HEK293 (cell line): ENCODE measurements at regions of chr5 and their contacts with region 1.

Region 1: DNA sequence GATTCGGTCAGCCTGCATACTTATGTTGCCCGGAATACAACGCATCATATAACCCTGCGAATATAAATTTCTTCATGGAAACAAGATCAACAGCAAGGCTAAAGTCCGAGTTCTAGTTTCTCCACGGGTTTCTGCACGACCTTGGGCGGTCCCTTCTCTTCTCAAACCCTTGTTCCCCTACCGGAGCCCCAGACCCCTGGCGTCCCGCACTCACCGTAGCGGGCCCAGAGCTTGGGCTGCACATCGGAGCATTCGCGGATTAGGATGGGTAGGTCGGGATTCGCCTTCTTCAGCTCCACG is 438 bp downstream of the NDUFA2 start:
- H3K4me3 ChIP-seq: peak overlapping the region; percentile 80
- H3K27ac ChIP-seq: peak overlapping the region; percentile 60; the same call in 1 of the 2 replicates
- H3K4me1 ChIP-seq: peaks cover 2% of the 10 kb centered on the region; the same call in 1 of the 2 replicates
- CTCF ChIP-seq: no peak

Region 2: DNA sequence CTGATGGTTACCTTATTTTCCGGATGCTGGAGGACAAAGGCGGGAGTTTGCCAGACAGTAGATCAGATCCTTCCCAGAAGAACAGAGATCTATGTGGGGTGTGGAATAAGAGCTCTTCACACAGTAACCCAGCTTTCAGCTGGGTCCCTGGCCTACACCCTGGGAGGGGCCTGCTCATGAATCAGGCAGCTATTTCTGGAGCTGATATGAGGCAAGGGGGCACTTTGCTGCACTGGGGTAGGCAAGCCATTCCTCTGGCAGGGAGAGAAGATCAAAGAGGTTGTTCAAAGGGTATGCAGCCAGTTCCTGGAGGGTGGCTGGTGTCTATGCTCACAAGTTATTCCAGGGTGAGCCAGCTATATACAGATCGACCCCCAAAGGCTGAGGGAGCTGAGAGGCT is 423.4 kb before region 1 on chr5:
- CTCF ChIA-PET with region 1: no interaction called
- POLR2A ChIA-PET with region 1: no interaction called
- H3K4me3 ChIP-seq: no peak overlapping the region
- H3K27ac ChIP-seq: no peak overlapping the region
- H3K4me1 ChIP-seq: peaks cover 22% of the 10 kb centered on the region
- CTCF ChIP-seq: no peak

Region 3: GRCh38 chr5:140401362-140402257 is 245.4 kb before region 1 on chr5 and contains the start of gene ANKHD1:
- CTCF ChIA-PET with region 1: no interaction called
- POLR2A ChIA-PET with region 1: interaction called, 10 read pairs
- H3K4me3 ChIP-seq: peak within 1 kb of the TSS; percentile 98
- H3K27ac ChIP-seq: peak within 1 kb of the TSS; percentile 91
- H3K4me1 ChIP-seq: peaks cover 8% of the 10 kb centered on the region; the same call in 1 of the 2 replicates
- CTCF ChIP-seq: peak; percentile 64; the same call in 1 of the 2 replicates

Region 4: GRCh38 chr5:140557136-140557805 is 89.7 kb before region 1 on chr5 and contains the start of gene SRA1:
- CTCF ChIA-PET with region 1: no interaction called
- POLR2A ChIA-PET with region 1: interaction called, 19 read pairs
- H3K4me3 ChIP-seq: peak within 1 kb of the TSS; percentile 90
- H3K27ac ChIP-seq: peak within 1 kb of the TSS; percentile 71
- H3K4me1 ChIP-seq: 0 out of 2 replicates have a peak, but pooled peaks cover 4% of the 10 kb centered on the region
- CTCF ChIP-seq: peak; percentile 45; the same call in 1 of the 2 replicates

Region 5: DNA sequence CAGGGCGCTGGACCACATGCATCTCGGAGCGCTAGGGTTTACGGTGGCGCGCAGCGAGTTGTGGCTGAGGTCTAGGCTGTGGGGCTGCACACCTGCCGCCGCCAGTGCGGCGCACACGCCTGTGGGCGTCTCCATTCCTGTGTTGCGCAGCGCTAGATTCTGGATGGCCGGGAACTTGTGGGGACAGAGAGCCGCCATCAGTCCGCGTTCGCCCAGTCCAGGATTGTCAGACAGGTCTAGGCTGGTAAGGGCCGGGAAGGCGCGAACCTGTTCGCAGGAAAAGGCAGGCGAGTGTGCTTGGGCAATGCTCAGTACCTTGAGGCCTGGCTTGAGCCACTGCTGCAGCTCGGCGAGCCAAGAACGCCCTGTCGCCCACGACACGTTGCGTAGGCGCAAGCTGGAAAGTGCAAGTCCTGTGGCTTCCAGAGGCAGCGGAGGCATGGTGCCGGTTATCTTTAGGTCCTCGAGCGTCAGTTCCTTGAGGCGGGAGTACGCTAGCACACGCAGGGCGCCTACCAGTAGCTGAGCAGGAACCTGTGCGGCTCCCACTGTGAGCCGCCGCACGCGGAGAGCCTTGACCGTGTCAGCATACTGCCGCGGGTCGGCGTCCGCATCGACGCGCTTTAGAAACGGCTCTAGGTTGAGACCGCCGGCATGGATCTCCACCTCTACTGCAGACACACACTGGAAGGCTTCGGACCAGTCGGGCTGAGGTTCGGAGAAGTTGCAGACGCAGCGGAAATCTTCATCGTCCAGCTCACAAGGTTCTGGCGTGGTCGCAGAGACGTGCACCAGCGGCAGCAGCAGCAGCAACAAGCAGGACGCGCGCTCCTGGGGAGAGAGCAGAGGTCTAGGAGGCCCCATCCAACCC is 14.6 kb before region 1 on chr5:
- CTCF ChIA-PET with region 1: interaction called, 10 read pairs
- POLR2A ChIA-PET with region 1: interaction called, 9 read pairs
- H3K4me3 ChIP-seq: no peak overlapping the region
- H3K27ac ChIP-seq: no peak overlapping the region
- H3K4me1 ChIP-seq: no peaks in the 10 kb centered on the region
- CTCF ChIP-seq: no peak

Region 6: DNA sequence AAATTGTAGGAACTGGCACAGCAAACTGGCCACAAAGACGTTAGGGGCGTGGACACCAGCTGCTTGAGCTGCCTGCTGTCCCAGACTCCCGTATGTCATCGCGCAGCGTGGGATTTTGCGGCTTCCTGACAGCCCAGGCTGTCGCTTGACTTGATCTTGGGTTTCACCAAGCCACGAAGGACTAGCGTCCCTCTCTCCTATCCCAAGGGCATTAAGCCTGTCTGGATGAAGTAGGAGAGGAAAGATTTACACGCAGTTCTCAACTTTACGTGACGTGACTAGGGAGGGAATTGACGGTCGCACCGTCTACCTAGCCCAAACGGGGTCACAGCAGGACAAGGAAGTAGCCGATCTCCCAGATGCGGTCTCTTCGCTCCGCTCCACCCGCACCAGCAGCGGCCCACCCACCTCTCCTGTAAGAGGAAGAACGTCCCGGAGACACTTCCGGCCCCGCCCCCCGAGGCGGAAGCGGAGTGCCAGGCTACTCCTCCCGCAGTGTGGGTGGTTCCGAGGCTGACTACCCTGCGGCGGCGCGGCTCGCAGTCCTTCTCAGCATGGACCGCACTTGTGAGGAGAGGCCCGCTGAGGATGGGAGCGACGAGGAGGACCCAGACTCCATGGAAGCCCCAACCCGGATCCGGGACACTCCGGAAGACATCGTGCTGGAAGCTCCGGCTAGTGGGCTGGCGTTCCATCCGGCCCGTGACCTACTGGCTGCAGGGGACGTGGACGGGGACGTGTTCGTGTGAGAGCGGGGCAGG is 17.5 kb after region 1 on chr5 and contains the start of gene WDR55:
- CTCF ChIA-PET with region 1: no interaction called
- POLR2A ChIA-PET with region 1: interaction called, 40 read pairs
- H3K4me3 ChIP-seq: peak within 1 kb of the TSS; percentile 72
- H3K27ac ChIP-seq: peak within 1 kb of the TSS; percentile 70
- H3K4me1 ChIP-seq: no peaks in the 10 kb centered on the region
- CTCF ChIP-seq: no peak

Region 7: GRCh38 chr5:140690941-140691924 is 44.2 kb after region 1 on chr5 and contains the starts of genes HARS1 and HARS2:
- CTCF ChIA-PET with region 1: interaction called, 3 read pairs
- POLR2A ChIA-PET with region 1: interaction called, 27 read pairs
- H3K4me3 ChIP-seq: peak within 1 kb of the TSS; percentile 72
- H3K27ac ChIP-seq: peak within 1 kb of the TSS; percentile 75
- H3K4me1 ChIP-seq: 0 out of 2 replicates have a peak, but pooled peaks cover 2% of the 10 kb centered on the region
- CTCF ChIP-seq: peak; percentile 52; the same call in 1 of the 2 replicates

Region 8: GRCh38 chr5:140710899-140711552 is 64.0 kb after region 1 on chr5:
- CTCF ChIA-PET with region 1: interaction called, 3 read pairs
- POLR2A ChIA-PET with region 1: interaction called, 23 read pairs
- H3K4me3 ChIP-seq: peak overlapping the region; percentile 56
- H3K27ac ChIP-seq: peak overlapping the region; percentile 50
- H3K4me1 ChIP-seq: no peaks in the 10 kb centered on the region
- CTCF ChIP-seq: no peak

Region 9: DNA sequence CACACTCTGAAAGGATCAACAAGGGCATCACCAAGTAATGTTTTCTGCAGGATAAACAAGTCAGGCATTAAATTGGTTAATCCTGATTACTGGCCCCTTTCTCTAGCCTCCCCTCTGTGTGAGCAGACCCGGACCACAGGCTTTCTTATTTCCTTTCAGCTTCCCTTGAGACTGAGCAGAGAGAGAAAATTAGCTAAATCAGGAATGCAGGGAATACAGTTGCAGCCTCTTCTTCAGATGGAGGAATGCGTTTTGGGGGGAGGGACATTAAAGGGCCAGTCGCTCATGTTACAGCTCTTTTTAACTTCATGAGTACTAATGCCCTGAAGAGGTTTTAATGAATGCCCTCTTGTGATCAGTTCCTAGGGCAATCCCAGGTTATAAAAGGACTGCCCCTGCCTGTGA is 339.1 kb after region 1 on chr5:
- CTCF ChIA-PET with region 1: no interaction called
- POLR2A ChIA-PET with region 1: no interaction called
- H3K4me3 ChIP-seq: no peak overlapping the region
- H3K27ac ChIP-seq: no peak overlapping the region
- H3K4me1 ChIP-seq: no peaks in the 10 kb centered on the region
- CTCF ChIP-seq: no peak